Caco-2 (cell line): ENCODE measurements at regions of chr3 and their contacts with region 1.

Region 1: DNA sequence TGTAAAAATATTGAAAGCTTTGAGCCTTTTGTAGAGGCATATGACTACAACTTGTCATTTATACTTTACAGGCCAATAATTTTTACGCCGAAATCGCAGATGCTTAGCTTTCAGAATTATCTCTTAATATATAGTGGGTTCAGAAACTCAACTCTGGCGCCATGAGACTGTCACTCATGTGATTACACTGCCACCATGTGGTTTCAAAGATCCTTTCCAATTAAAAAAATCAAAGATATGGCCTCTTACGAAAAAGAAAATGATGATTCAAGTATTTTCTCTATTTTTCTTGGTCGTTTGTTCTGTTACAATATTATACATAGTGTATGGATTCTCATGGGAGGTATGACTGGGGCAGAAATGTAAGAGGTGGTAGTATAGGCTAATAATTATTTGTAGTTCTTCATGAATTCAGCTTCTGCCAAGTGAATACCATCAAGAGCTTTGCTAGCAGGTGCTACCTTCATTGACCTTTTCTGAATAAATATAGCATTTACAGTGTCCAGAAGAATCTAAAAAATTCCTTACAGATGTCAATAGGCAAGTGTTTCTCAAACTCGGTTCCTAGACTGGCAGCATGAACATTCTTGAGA is 751.7 kb upstream of the GOLIM4 start:
- DNase-seq: peak in 1 of 2 experiments; percentile 35
- H3K4me3 ChIP-seq: no peak overlapping the region
- H3K4me3 Mint-ChIP-seq: no peak overlapping the region
- H3K27ac Mint-ChIP-seq: no peak overlapping the region
- H3K4me1 ChIP-seq: no peaks in the 10 kb centered on the region
- H3K4me1 Mint-ChIP-seq: no peaks in the 10 kb centered on the region
- H3K27me3 ChIP-seq: no peaks in the 10 kb centered on the region
- H3K27me3 Mint-ChIP-seq: peaks cover 17% of the 10 kb centered on the region
- CTCF ChIP-seq: peak; percentile 55 to 56

Region 2: DNA sequence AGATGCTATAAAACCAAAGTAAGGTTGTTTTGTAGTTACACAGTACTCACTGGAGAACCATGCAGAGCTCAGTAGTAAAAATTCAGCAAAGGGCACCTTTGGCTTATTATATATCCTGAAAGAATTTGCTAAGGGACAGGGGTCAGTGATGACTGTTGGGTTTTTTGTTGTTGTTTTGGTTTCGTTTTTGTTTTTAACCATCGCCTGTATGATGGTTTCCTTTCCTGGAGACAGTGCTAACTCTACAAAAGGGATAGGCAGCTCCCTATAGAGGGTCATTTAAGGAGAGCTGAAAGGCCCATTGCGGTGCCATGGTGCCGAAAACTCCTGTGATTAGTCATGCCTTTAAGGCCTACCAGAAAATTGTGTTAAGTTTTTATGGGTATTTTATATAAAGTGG is 633.5 kb before region 1 on chr3:
- CTCF ChIA-PET with region 1: interaction called, 10 read pairs
- POLR2A ChIA-PET with region 1: no interaction called
- intact Hi-C with region 1: loop called (anchors 1 kb)
- DNase-seq: no peak
- H3K4me3 ChIP-seq: no peak overlapping the region
- H3K4me3 Mint-ChIP-seq: no peak overlapping the region
- H3K27ac Mint-ChIP-seq: no peak overlapping the region
- H3K4me1 ChIP-seq: 0 out of 2 replicates have a peak, but pooled peaks cover 3% of the 10 kb centered on the region
- H3K4me1 Mint-ChIP-seq: no peaks in the 10 kb centered on the region
- H3K27me3 ChIP-seq: no peaks in the 10 kb centered on the region
- H3K27me3 Mint-ChIP-seq: peaks cover 14% of the 10 kb centered on the region
- CTCF ChIP-seq: no peak

Region 3: DNA sequence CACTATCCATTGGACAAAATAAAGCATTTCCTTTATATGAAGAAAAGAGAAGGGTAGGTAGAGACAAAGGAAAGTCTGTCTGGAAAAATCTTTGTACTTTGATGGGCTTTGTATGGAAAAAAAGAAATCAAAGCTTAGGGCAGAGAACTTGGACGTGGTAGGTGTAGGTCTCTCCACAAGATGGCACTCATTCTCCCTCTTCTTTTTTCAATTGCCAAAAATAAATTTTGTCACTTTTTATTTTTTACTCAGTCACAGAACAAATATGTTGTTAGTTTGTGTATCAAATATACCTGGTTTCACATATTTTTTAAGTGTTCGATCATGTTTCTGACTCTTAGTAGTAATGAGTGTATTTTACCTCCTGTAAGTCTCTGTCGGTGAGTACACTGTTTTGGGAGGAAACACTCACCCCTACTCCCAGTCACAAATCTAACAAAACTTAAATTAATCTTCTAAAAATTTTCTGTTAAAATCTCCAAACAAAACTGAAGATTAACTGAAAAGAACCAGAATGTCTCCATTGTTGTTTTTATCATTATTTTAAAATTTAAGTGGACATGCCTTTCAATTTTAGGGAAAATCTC is 335.9 kb before region 1 on chr3:
- CTCF ChIA-PET with region 1: interaction called, 6 read pairs
- POLR2A ChIA-PET with region 1: no interaction called
- intact Hi-C with region 1: loop called (anchors 1 kb)
- DNase-seq: no peak
- H3K4me3 ChIP-seq: no peak overlapping the region
- H3K4me3 Mint-ChIP-seq: no peak overlapping the region
- H3K27ac Mint-ChIP-seq: no peak overlapping the region
- H3K4me1 ChIP-seq: no peaks in the 10 kb centered on the region
- H3K4me1 Mint-ChIP-seq: no peaks in the 10 kb centered on the region
- H3K27me3 ChIP-seq: no peaks in the 10 kb centered on the region
- H3K27me3 Mint-ChIP-seq: peaks cover 5% of the 10 kb centered on the region
- CTCF ChIP-seq: peak; percentile 14 to 62

Region 4: GRCh38 chr3:168620826-168621225 is 226.6 kb before region 1 on chr3:
- CTCF ChIA-PET with region 1: interaction called, 5 read pairs
- POLR2A ChIA-PET with region 1: no interaction called
- intact Hi-C with region 1: loop called (anchors 1 kb)
- DNase-seq: peak; percentile 54 to 63
- H3K4me3 ChIP-seq: no peak overlapping the region
- H3K4me3 Mint-ChIP-seq: no peak overlapping the region
- H3K27ac Mint-ChIP-seq: no peak overlapping the region
- H3K4me1 ChIP-seq: no peaks in the 10 kb centered on the region
- H3K4me1 Mint-ChIP-seq: no peaks in the 10 kb centered on the region
- H3K27me3 ChIP-seq: no peaks in the 10 kb centered on the region
- H3K27me3 Mint-ChIP-seq: peaks cover 8% of the 10 kb centered on the region
- CTCF ChIP-seq: peak; percentile 62 to 86

Region 5: GRCh38 chr3:168722091-168722490 is 125.3 kb before region 1 on chr3:
- CTCF ChIA-PET with region 1: no interaction called
- POLR2A ChIA-PET with region 1: no interaction called
- intact Hi-C with region 1: no loop called
- DNase-seq: no peak
- H3K4me3 ChIP-seq: no peak overlapping the region
- H3K4me3 Mint-ChIP-seq: no peak overlapping the region
- H3K27ac Mint-ChIP-seq: no peak overlapping the region
- H3K4me1 ChIP-seq: no peaks in the 10 kb centered on the region
- H3K4me1 Mint-ChIP-seq: no peaks in the 10 kb centered on the region
- H3K27me3 ChIP-seq: no peaks in the 10 kb centered on the region
- H3K27me3 Mint-ChIP-seq: peaks cover 3% of the 10 kb centered on the region
- CTCF ChIP-seq: no peak

Region 6: DNA sequence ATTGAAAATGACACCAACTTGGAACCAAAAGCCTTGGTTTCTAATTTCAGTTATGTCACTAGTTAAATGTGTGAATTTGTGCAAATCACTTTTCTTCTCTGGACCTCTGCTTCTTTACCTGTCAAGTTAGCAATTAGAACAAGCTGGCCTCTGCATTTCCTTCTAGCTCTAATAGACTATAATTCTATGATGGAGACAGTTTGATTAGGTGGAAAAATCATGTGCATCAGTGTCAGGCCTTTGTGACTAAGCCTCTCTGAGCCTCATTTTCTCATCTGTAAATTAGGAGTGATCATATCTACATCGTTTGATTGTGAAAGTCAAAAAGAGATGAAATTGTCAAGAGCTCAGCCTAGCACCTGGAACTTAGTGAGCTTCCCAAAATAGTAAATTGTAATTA is 103.2 kb after region 1 on chr3:
- CTCF ChIA-PET with region 1: no interaction called
- POLR2A ChIA-PET with region 1: no interaction called
- intact Hi-C with region 1: no loop called
- DNase-seq: no peak
- H3K4me3 ChIP-seq: no peak overlapping the region
- H3K4me3 Mint-ChIP-seq: no peak overlapping the region
- H3K27ac Mint-ChIP-seq: no peak overlapping the region
- H3K4me1 ChIP-seq: peaks cover 14% of the 10 kb centered on the region
- H3K4me1 Mint-ChIP-seq: peaks cover 8% of the 10 kb centered on the region
- H3K27me3 ChIP-seq: no peaks in the 10 kb centered on the region
- H3K27me3 Mint-ChIP-seq: no peaks in the 10 kb centered on the region
- CTCF ChIP-seq: no peak

Region 7: DNA sequence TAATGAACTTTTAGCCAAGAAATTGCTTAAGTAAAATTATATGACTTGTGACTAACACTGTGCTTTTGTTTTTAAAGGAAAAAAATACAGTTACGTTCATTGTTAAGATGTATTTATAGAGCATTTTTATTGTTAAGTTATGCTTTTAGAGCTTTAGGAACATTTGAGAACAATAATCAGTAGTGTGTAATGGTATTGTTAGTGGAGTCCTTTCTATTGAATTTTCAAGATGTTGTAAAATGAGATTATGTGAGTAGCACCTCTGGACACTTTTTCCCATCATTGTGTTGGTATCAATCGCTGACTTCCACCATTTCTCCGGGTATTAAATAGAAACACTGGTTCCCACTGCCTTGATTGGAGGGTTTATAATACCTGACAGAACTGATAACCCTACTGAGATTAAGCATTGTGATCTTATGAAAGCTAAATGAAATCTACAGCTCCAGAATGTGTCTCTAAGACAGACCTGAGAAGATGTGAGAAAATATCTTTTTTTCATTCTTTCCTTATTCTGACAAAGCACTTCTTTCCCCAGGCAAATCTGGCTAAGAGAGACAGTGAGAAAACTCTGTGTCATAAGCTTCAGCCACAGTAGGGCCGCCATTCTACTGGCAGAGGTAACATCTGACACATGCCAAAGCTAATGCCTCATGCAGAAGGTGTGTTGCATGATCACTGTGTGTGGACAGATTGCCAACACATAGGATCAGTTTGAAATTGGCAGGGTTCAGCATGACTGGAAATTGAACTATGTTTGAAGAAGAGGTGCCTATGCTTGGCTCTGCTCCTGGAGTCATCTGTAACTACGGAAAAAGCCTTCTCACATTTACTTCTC is 205.3 kb after region 1 on chr3:
- CTCF ChIA-PET with region 1: no interaction called
- POLR2A ChIA-PET with region 1: no interaction called
- intact Hi-C with region 1: no loop called
- DNase-seq: no peak
- H3K4me3 ChIP-seq: no peak overlapping the region
- H3K4me3 Mint-ChIP-seq: no peak overlapping the region
- H3K27ac Mint-ChIP-seq: no peak overlapping the region
- H3K4me1 ChIP-seq: no peaks in the 10 kb centered on the region
- H3K4me1 Mint-ChIP-seq: no peaks in the 10 kb centered on the region
- H3K27me3 ChIP-seq: no peaks in the 10 kb centered on the region
- H3K27me3 Mint-ChIP-seq: peaks cover 5% of the 10 kb centered on the region
- CTCF ChIP-seq: no peak

Region 8: GRCh38 chr3:169122416-169122815 is 275.0 kb after region 1 on chr3:
- CTCF ChIA-PET with region 1: no interaction called
- POLR2A ChIA-PET with region 1: no interaction called
- intact Hi-C with region 1: no loop called
- DNase-seq: no peak
- H3K4me3 ChIP-seq: no peak overlapping the region
- H3K4me3 Mint-ChIP-seq: no peak overlapping the region
- H3K27ac Mint-ChIP-seq: no peak overlapping the region
- H3K4me1 ChIP-seq: peaks cover 13% of the 10 kb centered on the region; the same call in 1 of the 2 replicates
- H3K4me1 Mint-ChIP-seq: peaks cover 12% of the 10 kb centered on the region
- H3K27me3 ChIP-seq: no peaks in the 10 kb centered on the region
- H3K27me3 Mint-ChIP-seq: no peaks in the 10 kb centered on the region
- CTCF ChIP-seq: no peak